Mammary epithelial cell (primary cell): ENCODE measurements at regions of chr2 and their contacts with region 1.

Region 1: DNA sequence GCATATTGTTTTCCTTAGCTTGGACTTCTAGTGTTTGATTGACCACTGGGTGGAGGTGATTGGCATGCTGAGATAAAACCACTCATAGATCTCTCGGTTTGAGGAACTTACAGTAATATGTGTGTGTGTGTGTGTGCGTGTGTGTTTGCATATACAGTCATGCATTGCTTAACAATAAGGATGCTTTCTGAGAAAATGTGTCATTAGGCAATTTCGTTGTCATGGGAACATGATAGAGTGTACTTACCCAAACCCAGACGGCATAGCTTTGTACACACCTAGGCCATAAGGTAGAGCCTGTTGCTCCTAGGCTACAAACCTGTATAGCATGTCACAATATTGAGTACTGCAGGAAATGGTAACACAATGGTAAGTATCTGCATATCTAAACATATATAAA is 167.3 kb downstream of the NYAP2 start:
- DNase-seq: peak; percentile 11
- H3K4me3 ChIP-seq: no peak overlapping the region
- H3K27ac ChIP-seq: no peak overlapping the region
- H3K4me1 ChIP-seq: no peaks in the 10 kb centered on the region
- H3K27me3 ChIP-seq: no peaks in the 10 kb centered on the region
- CTCF ChIP-seq: no peak

Region 2: GRCh38 chr2:224691563-224691962 is 875.2 kb before region 1 on chr2:
- CTCF ChIA-PET with region 1: no interaction called
- dilution Hi-C with region 1: no loop called
- in situ Hi-C with region 1: no loop called
- intact Hi-C with region 1: loop called (anchors 10 kb)
- DNase-seq: no peak
- H3K4me3 ChIP-seq: no peak overlapping the region
- H3K27ac ChIP-seq: no peak overlapping the region
- H3K4me1 ChIP-seq: no peaks in the 10 kb centered on the region
- H3K27me3 ChIP-seq: no peaks in the 10 kb centered on the region
- CTCF ChIP-seq: no peak

Region 3: GRCh38 chr2:225512878-225513580 is 53.8 kb before region 1 on chr2:
- CTCF ChIA-PET with region 1: no interaction called
- dilution Hi-C with region 1: no loop called
- in situ Hi-C with region 1: no loop called
- intact Hi-C with region 1: no loop called
- DNase-seq: no peak
- H3K4me3 ChIP-seq: no peak overlapping the region
- H3K27ac ChIP-seq: no peak overlapping the region
- H3K4me1 ChIP-seq: no peaks in the 10 kb centered on the region
- H3K27me3 ChIP-seq: no peaks in the 10 kb centered on the region
- CTCF ChIP-seq: no peak